IMR-90 (cell line): ENCODE measurements at regions of chr1 and their contacts with region 1.

Region 1: DNA sequence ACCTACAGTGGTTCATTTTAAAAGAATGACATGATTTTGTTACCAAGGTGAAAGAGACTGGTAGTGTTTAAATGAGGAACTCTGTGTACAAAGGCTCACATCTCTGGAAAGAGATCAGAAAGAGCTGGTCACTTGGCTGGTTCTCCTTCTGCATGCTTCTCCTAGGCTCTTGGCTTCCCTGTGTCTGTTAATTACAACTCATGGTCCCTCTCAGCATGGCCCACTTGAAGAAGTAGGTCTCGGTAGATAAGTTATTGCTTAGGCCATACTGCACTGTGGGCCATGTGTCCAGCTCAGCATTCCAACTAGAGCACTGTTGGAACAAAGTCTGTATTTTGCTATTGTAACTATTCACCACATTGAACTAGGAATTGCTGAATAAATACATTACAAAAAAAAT is 91.1 kb downstream of the KIAA0319L start:
- DNase-seq: no peak
- ATAC-seq: no peak
- H3K4me3 ChIP-seq: no peak overlapping the region
- H3K27ac ChIP-seq: no peak overlapping the region
- H3K4me1 ChIP-seq: peaks cover 3% of the 10 kb centered on the region
- H3K27me3 ChIP-seq: no peaks in the 10 kb centered on the region
- CTCF ChIP-seq: no peak
- POLR2A ChIP-seq: no peak
- RAD21 ChIP-seq: no peak

Region 2: GRCh38 chr1:34896613-34897012 is 569.5 kb before region 1 on chr1:
- CTCF ChIA-PET with region 1: no interaction called
- POLR2A ChIA-PET with region 1: no interaction called
- dilution Hi-C with region 1: no loop called
- in situ Hi-C with region 1: no loop called
- intact Hi-C with region 1: loop called (anchors 5 kb)
- DNase-seq: no peak
- ATAC-seq: no peak
- H3K4me3 ChIP-seq: no peak overlapping the region
- H3K27ac ChIP-seq: no peak overlapping the region
- H3K4me1 ChIP-seq: no peaks in the 10 kb centered on the region
- H3K27me3 ChIP-seq: peaks cover 7% of the 10 kb centered on the region
- CTCF ChIP-seq: peak; percentile 32; the same call in 1 of the 2 replicates
- POLR2A ChIP-seq: no peak
- RAD21 ChIP-seq: peak; percentile 37

Region 3: GRCh38 chr1:35324486-35324885 is 141.6 kb before region 1 on chr1:
- CTCF ChIA-PET with region 1: no interaction called
- POLR2A ChIA-PET with region 1: no interaction called
- dilution Hi-C with region 1: no loop called
- in situ Hi-C with region 1: no loop called
- intact Hi-C with region 1: no loop called
- DNase-seq: peak; percentile 58
- ATAC-seq: peak; percentile 74
- H3K4me3 ChIP-seq: no peak overlapping the region
- H3K27ac ChIP-seq: no peak overlapping the region
- H3K4me1 ChIP-seq: no peaks in the 10 kb centered on the region; the same call in 1 of the 2 replicates
- H3K27me3 ChIP-seq: no peaks in the 10 kb centered on the region
- CTCF ChIP-seq: no peak
- POLR2A ChIP-seq: no peak
- RAD21 ChIP-seq: no peak

Region 4: GRCh38 chr1:36034692-36035091 is 568.6 kb after region 1 on chr1:
- CTCF ChIA-PET with region 1: no interaction called
- POLR2A ChIA-PET with region 1: no interaction called
- dilution Hi-C with region 1: no loop called
- in situ Hi-C with region 1: no loop called
- intact Hi-C with region 1: no loop called
- DNase-seq: peak; percentile 75
- ATAC-seq: peak; percentile 78
- H3K4me3 ChIP-seq: no peak overlapping the region
- H3K27ac ChIP-seq: no peak overlapping the region
- H3K4me1 ChIP-seq: no peaks in the 10 kb centered on the region
- H3K27me3 ChIP-seq: no peaks in the 10 kb centered on the region
- CTCF ChIP-seq: no peak
- POLR2A ChIP-seq: no peak
- RAD21 ChIP-seq: no peak